RWPE1 (cell line): ENCODE measurements at regions of chr11 and their contacts with region 1.

Region 1: GRCh38 chr11:112794331-112794846 is 166.8 kb upstream of the NCAM1 start:
- DNase-seq: no peak
- H3K27ac ChIP-seq: no peak overlapping the region
- CTCF ChIP-seq: no peak

Region 2: DNA sequence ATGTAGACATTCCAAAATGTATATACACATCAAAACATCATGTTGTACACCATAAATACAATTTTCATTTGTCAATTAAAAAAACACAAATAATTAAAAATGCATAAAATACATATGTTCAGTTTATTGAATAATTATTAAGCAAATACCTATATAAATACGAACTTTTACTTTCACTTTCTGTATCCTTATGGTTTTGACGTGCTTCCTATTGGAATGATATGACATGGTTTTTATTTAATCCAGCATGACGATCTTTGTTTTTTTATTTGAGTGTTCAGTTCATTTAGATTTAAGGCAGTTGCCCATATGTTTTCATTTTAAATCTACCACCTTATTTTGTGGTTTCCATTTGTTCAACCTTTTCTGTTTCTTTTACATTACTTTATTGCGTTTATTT is 335.4 kb before region 1 on chr11:
- CTCF ChIA-PET with region 1: no interaction called
- POLR2A ChIA-PET with region 1: no interaction called
- DNase-seq: no peak
- H3K27ac ChIP-seq: no peak overlapping the region
- CTCF ChIP-seq: no peak

Region 3: DNA sequence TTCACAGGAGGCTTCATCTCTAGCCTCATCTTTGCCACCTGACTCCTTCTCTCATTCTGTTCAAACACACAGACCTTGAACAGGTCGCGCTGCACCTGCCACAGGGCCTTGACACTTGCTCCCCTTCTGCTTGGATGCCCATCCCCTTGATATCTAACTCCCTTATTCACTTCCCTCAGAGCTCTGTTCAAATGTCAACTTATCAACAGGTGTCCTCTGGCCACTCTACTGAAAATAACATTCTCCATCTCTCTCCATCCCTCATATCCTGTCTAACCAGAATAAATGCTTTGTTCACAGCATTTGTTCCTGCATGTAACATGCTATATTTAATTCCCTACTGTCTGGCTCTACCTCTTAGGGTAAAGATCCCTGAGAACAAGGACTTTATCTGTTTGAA is 748.0 kb after region 1 on chr11:
- CTCF ChIA-PET with region 1: interaction called, 12 read pairs
- POLR2A ChIA-PET with region 1: no interaction called
- DNase-seq: no peak
- H3K27ac ChIP-seq: no peak overlapping the region
- CTCF ChIP-seq: no peak